Endothelial cell of umbilical vein (primary cell): ENCODE measurements at regions of chr19 and their contacts with region 1.

Region 1: DNA sequence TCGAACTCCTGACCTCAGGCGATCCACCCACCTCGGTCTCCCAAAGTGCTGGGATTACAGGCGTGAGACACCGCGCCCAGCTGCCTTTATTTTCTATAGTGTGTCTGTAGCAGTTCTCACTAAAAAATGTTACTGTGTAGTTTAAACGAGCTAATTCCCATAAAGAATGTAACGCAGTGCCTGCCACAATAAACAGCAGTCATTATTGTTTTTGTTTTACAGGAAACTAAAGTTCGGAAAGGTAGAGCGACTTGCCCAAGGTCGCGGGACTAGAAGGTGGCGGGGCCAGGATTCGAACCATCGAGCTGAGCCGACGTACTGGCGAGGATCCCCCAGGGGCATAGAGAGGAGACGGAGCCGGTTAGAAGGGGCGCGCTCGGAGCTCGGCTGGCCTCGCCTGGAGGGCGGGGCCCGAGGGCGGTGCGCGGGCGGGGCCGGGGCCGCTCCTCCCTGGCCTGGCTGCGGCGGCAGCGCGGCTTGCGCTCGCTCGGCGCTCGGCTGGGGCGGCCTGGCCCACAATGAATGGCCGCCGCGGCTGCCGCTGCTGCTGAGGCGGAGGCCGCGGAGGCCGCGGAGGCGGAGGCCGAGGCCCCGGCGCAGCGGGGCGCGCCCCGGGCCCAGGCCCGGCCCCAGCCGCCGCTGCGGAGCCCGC is at the start of gene NACC1:
- DNase-seq: peak; percentile 87
- H3K4me3 ChIP-seq: peak within 1 kb of the TSS; percentile 64 to 99 (median 81)
- H3K27ac ChIP-seq: peak within 1 kb of the TSS; percentile 57
- H3K4me1 ChIP-seq: peaks cover 13% of the 10 kb centered on the region
- H3K27me3 ChIP-seq: no peaks in the 10 kb centered on the region
- CTCF ChIP-seq: no peak
- POLR2A ChIP-seq: no peak
- total RNA-seq, gene NACC1: 95.4 and 97.6 TPM in 2 replicates

Region 2: GRCh38 chr19:13099073-13099999 is 18.6 kb before region 1 on chr19:
- CTCF ChIA-PET with region 1: interaction called, 24 read pairs
- POLR2A ChIA-PET with region 1: interaction called, 3 read pairs
- dilution Hi-C with region 1: no loop called
- intact Hi-C with region 1: loop called (anchors 1 kb)
- DNase-seq: peak; percentile 79
- H3K4me3 ChIP-seq: peak overlapping the region in 2 of 3 experiments; percentile 10 to 17
- H3K27ac ChIP-seq: peak overlapping the region; percentile 89
- H3K4me1 ChIP-seq: peaks cover 54% of the 10 kb centered on the region
- H3K27me3 ChIP-seq: no peaks in the 10 kb centered on the region
- CTCF ChIP-seq: no peak
- POLR2A ChIP-seq: peak; percentile 84

Region 3: GRCh38 chr19:13162518-13163314 is 44.8 kb after region 1 on chr19:
- CTCF ChIA-PET with region 1: no interaction called
- POLR2A ChIA-PET with region 1: no interaction called
- dilution Hi-C with region 1: no loop called
- intact Hi-C with region 1: loop called (anchors 1 kb)
- DNase-seq: peak; percentile 97
- H3K4me3 ChIP-seq: peak overlapping the region in 1 of 3 experiments; percentile 28
- H3K27ac ChIP-seq: peak overlapping the region; percentile 99
- H3K4me1 ChIP-seq: peaks cover 42% of the 10 kb centered on the region
- H3K27me3 ChIP-seq: no peaks in the 10 kb centered on the region
- CTCF ChIP-seq: no peak
- POLR2A ChIP-seq: peak; percentile 69